Activated CD4-positive, alpha-beta T cell treated with anti-CD3 and anti-CD28 coated beads for 36 hours (primary cell): ENCODE measurements at regions of chr13 and their contacts with region 1.

Region 1: DNA sequence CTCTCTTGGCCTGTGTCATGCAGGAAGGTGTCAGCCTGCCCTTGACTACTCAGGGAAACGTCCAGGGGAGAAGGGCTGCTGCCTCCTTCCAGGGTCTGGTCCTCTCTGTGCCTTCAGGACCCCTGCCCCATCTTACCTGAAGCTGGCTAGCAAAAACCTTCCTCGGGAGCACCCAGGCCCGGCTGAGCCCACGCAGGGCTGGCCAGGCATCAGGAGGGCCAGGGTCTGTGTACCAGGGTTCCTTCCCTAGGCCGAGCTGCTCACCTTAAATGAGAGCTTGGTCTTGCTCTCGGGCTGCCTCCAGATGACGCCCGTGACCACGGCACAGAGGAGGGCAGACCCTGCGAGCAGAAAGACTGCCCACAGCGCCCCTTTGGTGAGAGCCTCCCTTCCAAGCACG is 78.6 kb downstream of the SLC7A1 start:
- DNase-seq: no peak
- ATAC-seq: no peak
- H3K4me3 Mint-ChIP-seq: no peak overlapping the region
- H3K27ac Mint-ChIP-seq: no peak overlapping the region
- H3K4me1 Mint-ChIP-seq: no peaks in the 10 kb centered on the region
- H3K27me3 Mint-ChIP-seq: no peaks in the 10 kb centered on the region

Region 2: GRCh38 chr13:29537736-29538651 is 21.1 kb after region 1 on chr13:
- CTCF ChIA-PET with region 1: no interaction called
- POLR2A ChIA-PET with region 1: no interaction called
- intact Hi-C with region 1: loop called in 1 of 2 experiments (anchors 2 kb)
- DNase-seq: no peak
- ATAC-seq: no peak
- H3K4me3 Mint-ChIP-seq: no peak overlapping the region
- H3K27ac Mint-ChIP-seq: no peak overlapping the region
- H3K4me1 Mint-ChIP-seq: peaks cover 30% of the 10 kb centered on the region
- H3K27me3 Mint-ChIP-seq: no peaks in the 10 kb centered on the region